GM12878 (cell line): ENCODE measurements at regions of chr1 and their contacts with region 1.

Region 1: DNA sequence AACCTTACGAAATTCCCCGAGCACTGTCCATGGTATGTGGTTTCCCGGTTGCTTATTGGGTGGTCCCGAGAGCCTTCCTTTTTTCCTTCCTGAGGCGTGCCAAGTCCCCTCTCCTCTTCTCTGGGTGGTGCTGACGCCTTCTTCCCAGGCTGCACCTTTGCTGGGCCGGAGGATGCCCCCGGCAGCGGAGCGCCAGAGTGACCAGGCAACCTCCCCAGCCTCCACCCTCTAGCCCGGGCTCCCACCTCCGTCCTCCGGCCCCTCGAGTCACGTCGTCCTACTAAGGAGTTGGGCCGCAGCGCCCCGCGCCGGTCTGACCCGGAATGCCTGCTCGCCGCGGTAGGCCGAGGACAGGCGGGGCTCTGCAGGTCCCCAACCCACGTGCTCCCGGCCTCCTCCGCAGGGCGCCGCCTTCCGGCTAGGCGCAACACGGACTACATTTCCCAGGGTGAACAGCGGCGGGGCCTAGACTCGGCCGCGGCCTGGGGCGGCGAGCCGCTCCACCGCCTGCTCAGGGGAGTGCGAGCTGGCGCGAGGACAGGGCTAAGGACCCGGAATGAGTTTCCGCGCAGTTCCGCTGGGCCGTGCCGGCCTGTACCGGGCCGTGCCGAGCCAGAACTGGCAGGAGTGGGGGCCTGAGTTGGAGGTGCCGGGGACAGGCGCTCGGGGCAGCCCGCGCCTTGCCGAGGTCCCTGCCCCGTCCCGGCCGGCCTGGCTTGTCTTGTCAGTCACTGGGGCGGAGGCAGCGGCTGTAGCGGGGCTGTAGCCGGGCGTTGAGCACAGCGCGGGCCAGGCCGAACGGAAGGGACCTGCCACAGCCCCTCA is at the start of gene IPO13:
- DNase-seq: peak; percentile 89
- ATAC-seq: peak; percentile 96
- H3K4me3 ChIP-seq: peak within 1 kb of the TSS; percentile 96
- H3K27ac ChIP-seq: peak within 1 kb of the TSS; percentile 93
- H3K4me1 ChIP-seq: peaks cover 10% of the 10 kb centered on the region
- H3K27me3 ChIP-seq: no peaks in the 10 kb centered on the region
- CTCF ChIP-seq: peak; percentile 83 to 87 (median 85)
- EP300 ChIP-seq: no peak
- POLR2A ChIP-seq: peak; percentile 95
- RAD21 ChIP-seq: peak; percentile 59
- polyA plus RNA-seq, gene IPO13: 7.1 to 9.5 TPM

Region 2: GRCh38 chr1:43650310-43651085 is 295.9 kb before region 1 on chr1:
- CTCF ChIA-PET with region 1: interaction called, 6 read pairs
- POLR2A ChIA-PET with region 1: interaction called, 3 read pairs
- RAD21 ChIA-PET with region 1: interaction called, 11 read pairs
- SMC1A ChIA-PET with region 1: interaction called, 4 read pairs
- in situ Hi-C with region 1: no loop called
- intact Hi-C with region 1: loop called (anchors 2 kb)
- DNase-seq: peak; percentile 83
- ATAC-seq: peak; percentile 87
- H3K4me3 ChIP-seq: peak overlapping the region; percentile 98
- H3K27ac ChIP-seq: peak overlapping the region; percentile 85
- H3K4me1 ChIP-seq: peaks cover 10% of the 10 kb centered on the region
- H3K27me3 ChIP-seq: no peaks in the 10 kb centered on the region
- CTCF ChIP-seq: no peak
- EP300 ChIP-seq: no peak
- POLR2A ChIP-seq: peak; percentile 100
- RAD21 ChIP-seq: no peak

Region 3: DNA sequence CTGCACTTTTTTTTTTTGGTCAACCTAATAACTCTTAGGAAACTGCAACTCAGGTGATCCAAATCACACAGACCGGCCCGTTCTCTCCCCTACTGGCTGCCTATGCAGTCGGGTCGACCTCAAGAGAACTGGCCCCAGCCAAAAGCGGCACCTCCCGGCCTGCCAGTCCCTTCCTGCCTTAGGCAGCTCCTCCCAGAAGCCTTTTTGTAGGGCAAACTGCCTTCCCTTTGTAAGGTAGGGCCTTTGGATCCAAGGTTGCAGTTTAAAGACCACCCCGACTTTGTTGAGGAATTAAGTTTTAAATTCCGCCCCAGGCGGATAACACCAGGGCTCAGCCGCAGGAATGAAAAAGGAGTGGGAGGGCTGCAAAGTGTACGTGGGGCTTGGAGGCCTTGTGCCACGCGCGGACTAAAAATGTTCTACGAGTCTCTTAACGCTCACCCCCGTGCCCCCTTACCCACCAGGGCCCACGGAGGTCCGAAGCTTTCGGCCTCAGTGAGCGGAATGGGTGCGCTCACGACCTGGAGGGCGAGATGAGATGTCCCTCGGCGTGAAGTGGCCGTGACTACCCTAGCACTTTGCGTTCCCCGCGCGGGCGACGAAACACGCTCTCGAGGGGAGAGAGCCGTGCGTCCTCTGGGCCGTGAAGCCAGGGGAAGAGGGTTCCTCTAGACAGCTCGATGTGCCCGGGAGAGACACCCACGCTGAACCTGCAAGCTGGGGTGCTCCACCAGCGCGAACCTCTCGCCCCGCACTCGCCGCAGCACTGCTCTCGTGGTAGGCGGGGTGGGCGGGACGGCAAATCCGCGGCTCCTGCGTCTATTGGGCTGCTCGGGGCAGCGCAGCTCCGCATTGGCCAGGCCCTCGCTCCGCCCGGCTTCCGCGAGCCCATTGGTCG is 239.6 kb before region 1 on chr1:
- CTCF ChIA-PET with region 1: interaction called, 7 read pairs
- POLR2A ChIA-PET with region 1: no interaction called
- RAD21 ChIA-PET with region 1: interaction called, 4 read pairs
- SMC1A ChIA-PET with region 1: interaction called, 3 read pairs
- in situ Hi-C with region 1: no loop called
- intact Hi-C with region 1: loop called (anchors 5 kb)
- DNase-seq: peak; percentile 67
- ATAC-seq: peak; percentile 97
- H3K4me3 ChIP-seq: peak overlapping the region; percentile 78
- H3K27ac ChIP-seq: peak overlapping the region; percentile 71
- H3K4me1 ChIP-seq: peaks cover 3% of the 10 kb centered on the region; the same call in 1 of the 2 replicates
- H3K27me3 ChIP-seq: no peaks in the 10 kb centered on the region
- CTCF ChIP-seq: no peak
- EP300 ChIP-seq: 0 out of 4 replicates have a peak, but pooled peaks of 1 of the 2 experiments have one; percentile 22
- POLR2A ChIP-seq: peak; percentile 96
- RAD21 ChIP-seq: no peak

Region 4: GRCh38 chr1:43774359-43774758 is 172.1 kb before region 1 on chr1:
- CTCF ChIA-PET with region 1: interaction called, 1,117 read pairs
- POLR2A ChIA-PET with region 1: interaction called, 4 read pairs
- RAD21 ChIA-PET with region 1: interaction called, 4 read pairs
- SMC1A ChIA-PET with region 1: interaction called, 6 read pairs
- in situ Hi-C with region 1: no loop called
- intact Hi-C with region 1: no loop called
- DNase-seq: no peak
- ATAC-seq: no peak
- H3K4me3 ChIP-seq: no peak overlapping the region
- H3K27ac ChIP-seq: no peak overlapping the region
- H3K4me1 ChIP-seq: peaks cover 9% of the 10 kb centered on the region
- H3K27me3 ChIP-seq: no peaks in the 10 kb centered on the region
- CTCF ChIP-seq: no peak
- EP300 ChIP-seq: no peak
- POLR2A ChIP-seq: no peak
- RAD21 ChIP-seq: no peak

Region 5: GRCh38 chr1:43974443-43975248 is 28.2 kb after region 1 on chr1 and contains the start of gene ATP6V0B:
- CTCF ChIA-PET with region 1: interaction called, 4 read pairs
- POLR2A ChIA-PET with region 1: interaction called, 18 read pairs
- RAD21 ChIA-PET with region 1: interaction called, 4 read pairs
- SMC1A ChIA-PET with region 1: interaction called, 4 read pairs
- in situ Hi-C with region 1: no loop called
- intact Hi-C with region 1: loop called (anchors 1 kb)
- DNase-seq: peak; percentile 59
- ATAC-seq: peak; percentile 80
- H3K4me3 ChIP-seq: peak within 1 kb of the TSS; percentile 95
- H3K27ac ChIP-seq: peak within 1 kb of the TSS; percentile 73
- H3K4me1 ChIP-seq: peaks cover 31% of the 10 kb centered on the region
- H3K27me3 ChIP-seq: no peaks in the 10 kb centered on the region
- CTCF ChIP-seq: peak in 2 of 3 experiments; percentile 1 to 6; a peak in 1 of 6 replicates
- EP300 ChIP-seq: no peak
- POLR2A ChIP-seq: peak; percentile 92
- RAD21 ChIP-seq: no peak
- polyA plus RNA-seq, gene ATP6V0B: 65.3 to 157 TPM

Region 6: GRCh38 chr1:43991476-43992231 is 45.2 kb after region 1 on chr1 and contains the start of gene CCDC24:
- CTCF ChIA-PET with region 1: interaction called, 11 read pairs
- POLR2A ChIA-PET with region 1: no interaction called
- RAD21 ChIA-PET with region 1: no interaction called
- SMC1A ChIA-PET with region 1: interaction called, 7 read pairs
- in situ Hi-C with region 1: no loop called
- intact Hi-C with region 1: no loop called
- DNase-seq: no peak
- ATAC-seq: peak; percentile 90
- H3K4me3 ChIP-seq: peak within 1 kb of the TSS; percentile 72
- H3K27ac ChIP-seq: peak within 1 kb of the TSS; percentile 42; the same call in 1 of the 2 replicates
- H3K4me1 ChIP-seq: peaks cover 17% of the 10 kb centered on the region
- H3K27me3 ChIP-seq: no peaks in the 10 kb centered on the region
- CTCF ChIP-seq: no peak
- EP300 ChIP-seq: no peak
- POLR2A ChIP-seq: peak; percentile 74
- RAD21 ChIP-seq: no peak
- polyA plus RNA-seq, gene CCDC24: 0.18 TPM in 1 of 2 experiments, not detected in the other

Region 7: GRCh38 chr1:44036409-44037139 is 90.1 kb after region 1 on chr1:
- CTCF ChIA-PET with region 1: interaction called, 11 read pairs
- POLR2A ChIA-PET with region 1: no interaction called
- RAD21 ChIA-PET with region 1: interaction called, 4 read pairs
- SMC1A ChIA-PET with region 1: interaction called, 3 read pairs
- in situ Hi-C with region 1: no loop called
- intact Hi-C with region 1: loop called (anchors 5 kb)
- DNase-seq: no peak
- ATAC-seq: peak; percentile 92
- H3K4me3 ChIP-seq: no peak overlapping the region
- H3K27ac ChIP-seq: no peak overlapping the region
- H3K4me1 ChIP-seq: peaks cover 9% of the 10 kb centered on the region; the same call in 1 of the 2 replicates
- H3K27me3 ChIP-seq: no peaks in the 10 kb centered on the region
- CTCF ChIP-seq: peak; percentile 91 to 96 (median 95)
- EP300 ChIP-seq: no peak
- POLR2A ChIP-seq: no peak
- RAD21 ChIP-seq: peak; percentile 83